GM18951 (cell line): ENCODE measurements at regions of chr7 and their contacts with region 1.

Region 1: DNA sequence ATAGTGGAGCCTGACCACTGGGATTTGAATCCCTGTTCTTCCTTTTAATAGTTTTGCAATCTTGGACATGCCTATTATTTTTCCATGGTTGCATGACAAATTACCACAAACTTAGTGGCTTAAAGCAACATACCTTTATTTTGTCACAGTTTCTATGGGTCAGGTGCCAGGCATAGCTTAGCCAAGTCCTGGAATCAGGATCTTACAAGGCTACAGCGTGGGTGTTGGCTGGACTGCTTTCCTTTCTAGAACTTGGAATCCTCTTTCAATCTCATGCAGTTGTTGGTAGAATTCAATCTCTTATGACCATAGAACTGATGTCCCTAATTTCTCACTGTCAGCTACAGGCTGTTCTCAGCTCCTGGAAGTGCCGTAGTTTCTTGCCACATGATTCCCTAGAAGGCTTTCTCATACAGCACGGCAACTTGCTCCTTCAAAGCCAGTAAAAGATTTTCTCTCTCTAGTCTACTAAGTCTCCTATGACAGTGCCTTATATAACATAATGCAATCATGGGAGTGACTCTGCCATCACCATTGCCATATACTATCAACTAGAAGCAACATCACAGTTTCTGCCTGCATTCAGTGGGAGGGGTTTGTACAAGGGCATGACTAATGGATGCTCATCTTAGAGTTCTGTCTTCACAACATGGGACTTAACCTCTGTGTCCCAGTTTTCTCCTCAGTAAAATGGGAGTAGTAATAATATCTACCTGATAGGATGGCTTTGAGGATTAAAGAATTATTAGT is 243.4 kb upstream of the FZD1 start:
- POLR2A ChIP-seq: no peak

Region 2: GRCh38 chr7:90666186-90666585 is 354.6 kb before region 1 on chr7:
- in situ Hi-C with region 1: no loop called
- POLR2A ChIP-seq: no peak

Region 3: GRCh38 chr7:90708841-90709317 is 311.9 kb before region 1 on chr7:
- in situ Hi-C with region 1: loop called (anchors 10 kb)
- POLR2A ChIP-seq: no peak

Region 4: GRCh38 chr7:90877201-90877600 is 143.6 kb before region 1 on chr7:
- in situ Hi-C with region 1: no loop called
- POLR2A ChIP-seq: no peak

Region 5: GRCh38 chr7:91165006-91165845 is 144.4 kb after region 1 on chr7:
- in situ Hi-C with region 1: no loop called
- POLR2A ChIP-seq: no peak